PC-9 (cell line): ENCODE measurements at regions of chr17 and their contacts with region 1.

Region 1: GRCh38 chr17:81650951-81651350 is 5.4 kb downstream of the PDE6G start:
- DNase-seq: no peak
- H3K4me3 ChIP-seq: no peak overlapping the region
- H3K27ac ChIP-seq: no peak overlapping the region
- H3K4me1 ChIP-seq: no peaks in the 10 kb centered on the region
- H3K27me3 ChIP-seq: no peaks in the 10 kb centered on the region
- CTCF ChIP-seq: no peak

Region 2: DNA sequence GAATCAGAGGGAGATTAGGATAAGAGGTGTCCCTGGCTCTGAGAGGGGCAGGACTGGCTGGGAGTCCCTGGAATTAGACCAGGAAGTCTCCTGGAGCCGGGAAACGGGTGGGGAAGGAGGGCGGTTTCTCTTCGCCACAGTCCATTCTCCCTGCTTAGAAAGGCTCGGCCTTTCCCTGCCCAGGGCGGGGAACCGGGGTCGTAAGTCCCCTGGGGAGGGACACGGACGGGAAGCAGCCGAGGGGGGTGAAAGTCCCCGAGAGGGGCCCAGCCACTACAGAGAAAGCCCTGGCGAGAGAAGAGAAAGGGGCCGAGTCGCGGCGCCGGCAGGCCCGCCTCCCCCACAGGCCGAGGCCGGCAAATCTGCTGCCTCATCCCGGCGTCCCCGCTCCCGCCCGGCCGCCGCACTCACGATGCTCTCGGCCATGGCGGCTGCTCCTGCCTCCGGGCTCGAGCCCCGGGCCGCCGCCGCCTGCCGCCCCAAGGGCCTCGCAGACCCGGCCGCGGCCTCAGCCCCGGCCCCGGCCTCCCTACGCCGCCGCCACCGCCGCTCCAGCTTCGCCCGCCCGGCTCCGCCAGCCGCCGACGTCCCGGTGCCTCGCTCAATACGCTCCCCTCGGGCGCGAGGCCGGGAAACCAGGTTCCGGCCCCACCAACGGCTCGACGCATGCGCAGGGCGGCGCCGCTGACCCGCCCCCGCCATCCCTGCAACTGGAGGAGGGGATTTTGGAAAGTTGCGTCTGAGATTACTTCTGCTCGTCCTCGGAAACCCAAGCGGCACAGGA is 14.3 kb before region 1 on chr17 and contains the starts of genes NPLOC4 and TSPAN10:
- CTCF ChIA-PET with region 1: no interaction called
- POLR2A ChIA-PET with region 1: no interaction called
- intact Hi-C with region 1: no loop called
- DNase-seq: peak; percentile 41 to 92
- H3K4me3 ChIP-seq: peak within 1 kb of the TSS; percentile 96
- H3K27ac ChIP-seq: peak within 1 kb of the TSS; percentile 71
- H3K4me1 ChIP-seq: peaks cover 11% of the 10 kb centered on the region; the same call in 1 of the 2 replicates
- H3K27me3 ChIP-seq: no peaks in the 10 kb centered on the region
- CTCF ChIP-seq: no peak
- total RNA-seq, gene NPLOC4: 154 and 208 TPM in 2 replicates
- total RNA-seq, gene TSPAN10: 8.6 and 15.0 TPM in 2 replicates

Region 3: DNA sequence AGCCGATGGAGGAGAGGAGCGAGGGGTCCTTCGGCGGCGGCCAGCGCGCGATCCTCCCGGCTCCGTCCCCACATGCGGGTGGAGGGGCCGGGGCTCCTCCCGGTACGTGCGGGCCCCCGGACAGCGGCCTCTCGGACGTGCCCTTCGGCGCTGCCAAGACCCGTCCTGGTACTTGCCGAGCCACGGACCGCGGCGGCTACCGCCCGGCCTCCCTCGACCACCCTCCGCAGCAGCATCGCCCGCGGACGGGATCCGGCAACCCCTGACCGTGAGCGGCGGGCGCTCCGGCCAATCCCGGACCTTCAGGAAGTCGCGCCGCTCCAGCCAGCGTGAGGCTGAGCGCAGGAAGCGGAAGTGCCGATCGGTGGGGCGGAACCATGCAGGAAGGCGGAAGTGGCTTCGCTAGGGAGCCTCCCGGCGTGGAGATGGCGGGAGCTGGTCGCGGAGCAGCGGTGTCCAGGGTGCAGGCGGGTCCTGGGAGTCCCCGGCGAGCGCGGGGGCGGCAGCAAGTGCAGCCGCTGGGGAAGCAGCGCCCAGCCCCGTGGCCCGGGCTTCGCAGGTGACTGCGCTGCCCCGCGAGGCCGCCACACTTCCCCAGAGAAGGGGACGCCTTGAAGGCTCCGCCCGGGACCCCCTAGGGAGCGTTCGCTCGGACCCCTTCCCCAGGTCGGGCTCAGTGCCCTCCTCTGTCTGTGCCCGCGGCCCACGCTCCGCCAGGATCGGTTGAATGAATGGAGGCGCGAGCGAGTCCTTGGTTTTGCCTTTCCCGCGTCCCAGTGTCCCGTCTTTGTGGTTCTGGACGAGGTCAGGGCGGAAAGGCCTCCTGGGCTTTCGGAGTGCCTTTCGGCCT is 15.6 kb after region 1 on chr17 and contains the starts of genes CCDC137 and OXLD1:
- CTCF ChIA-PET with region 1: no interaction called
- POLR2A ChIA-PET with region 1: interaction called, 32 read pairs
- intact Hi-C with region 1: no loop called
- DNase-seq: peak; percentile 81 to 96
- H3K4me3 ChIP-seq: peak within 1 kb of the TSS; percentile 86
- H3K27ac ChIP-seq: peak within 1 kb of the TSS; percentile 19; the same call in 1 of the 2 replicates
- H3K4me1 ChIP-seq: peaks cover 10% of the 10 kb centered on the region
- H3K27me3 ChIP-seq: no peaks in the 10 kb centered on the region
- CTCF ChIP-seq: no peak
- total RNA-seq, gene CCDC137: 29.3 and 30.0 TPM in 2 replicates
- total RNA-seq, gene OXLD1: 40.2 and 66.0 TPM in 2 replicates

Region 4: DNA sequence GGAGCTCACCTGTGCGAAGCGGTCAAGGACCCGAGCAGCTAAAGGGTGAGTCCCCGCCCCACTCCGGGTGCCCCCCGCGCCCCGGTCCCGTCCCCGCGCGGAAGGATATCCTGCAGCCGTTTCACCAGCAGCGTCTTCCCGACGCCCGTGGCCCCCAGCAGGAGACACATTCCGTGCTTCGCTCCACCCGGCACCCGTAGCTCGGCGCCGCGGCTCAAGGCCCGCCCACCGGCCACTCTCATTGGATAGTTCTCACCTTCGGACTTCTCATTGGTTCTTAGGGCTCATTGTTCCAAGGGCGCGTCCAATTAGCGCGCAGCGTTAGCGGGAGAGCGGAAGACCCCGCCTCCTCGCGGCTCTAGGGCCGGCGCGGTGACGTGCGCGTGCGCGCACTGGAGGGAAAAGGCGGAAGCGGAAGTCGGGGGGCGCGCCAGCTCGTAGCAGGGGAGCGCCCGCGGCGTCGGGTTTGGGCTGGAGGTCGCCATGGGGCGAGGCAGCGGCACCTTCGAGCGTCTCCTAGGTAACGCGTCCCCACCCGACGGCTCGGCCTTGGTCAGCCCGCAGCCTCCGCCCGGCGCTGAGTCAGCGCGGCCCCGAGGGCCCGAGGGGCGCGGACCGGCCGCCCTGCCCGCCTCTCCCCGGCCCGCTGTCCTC is 32.8 kb after region 1 on chr17 and contains the starts of genes ARL16 and HGS:
- CTCF ChIA-PET with region 1: no interaction called
- POLR2A ChIA-PET with region 1: no interaction called
- intact Hi-C with region 1: no loop called
- DNase-seq: peak; percentile 90 to 99
- H3K4me3 ChIP-seq: peak within 1 kb of the TSS; percentile 93
- H3K27ac ChIP-seq: peak within 1 kb of the TSS; percentile 78
- H3K4me1 ChIP-seq: peaks cover 5% of the 10 kb centered on the region
- H3K27me3 ChIP-seq: no peaks in the 10 kb centered on the region
- CTCF ChIP-seq: no peak
- total RNA-seq, gene ARL16: 41.7 and 48.3 TPM in 2 replicates
- total RNA-seq, gene HGS: 149 and 166 TPM in 2 replicates